ENCODE measurements at regions of chr14 and their contacts with region 1.

Region 1: DNA sequence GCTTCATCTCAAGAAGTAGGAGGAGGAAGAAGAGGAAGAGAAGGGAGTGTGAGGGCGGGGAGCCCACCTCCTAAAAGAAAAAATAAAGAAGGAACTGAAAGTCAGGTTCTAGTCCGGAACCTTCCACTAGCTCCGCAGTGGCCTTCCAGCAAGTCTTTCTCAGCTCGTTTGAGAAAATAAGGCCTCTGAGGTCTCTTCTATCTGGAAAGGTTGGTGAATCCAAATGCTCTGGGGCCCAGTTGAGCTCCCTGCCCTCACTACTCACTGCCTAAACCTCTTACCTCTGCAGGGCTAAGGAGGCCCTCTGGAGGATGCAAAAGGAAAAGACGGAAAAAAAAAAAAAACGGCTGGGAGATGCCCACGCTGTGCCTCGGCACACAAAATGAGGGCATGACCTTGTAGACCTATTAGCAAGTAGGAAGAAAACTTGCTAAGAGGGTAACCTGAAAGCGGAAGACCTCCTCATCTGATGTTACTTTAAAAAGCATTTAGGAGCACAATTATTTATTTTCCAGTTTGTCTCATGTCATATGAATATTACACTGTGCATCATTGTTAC is 35.9 kb downstream of the FBLN5 start:
- DNase-seq: peak in 2 of 7 donors; percentile 35 to 38
- H3K4me3 ChIP-seq: no peak overlapping the region
- H3K27ac ChIP-seq: no peak overlapping the region
- H3K4me1 ChIP-seq: peaks cover 0 to 5% of the 10 kb centered on the region in 2 donors
- H3K27me3 ChIP-seq: no peaks in the 10 kb centered on the region
- CTCF ChIP-seq: peak in 5 of 6 experiments; percentile 17 to 56 (median 42)
- POLR2A ChIP-seq: no peak

Region 2: GRCh38 chr14:91649930-91650329 is 261.6 kb before region 1 on chr14:
- intact Hi-C with region 1: loop called in 1 of 2 experiments (anchors 5 kb)
- DNase-seq: peak in 2 of 7 donors; percentile 8 to 27
- H3K4me3 ChIP-seq: no peak overlapping the region
- H3K27ac ChIP-seq: no peak overlapping the region
- H3K4me1 ChIP-seq: no peaks in the 10 kb centered on the region
- H3K27me3 ChIP-seq: no peaks in the 10 kb centered on the region
- CTCF ChIP-seq: peak; percentile 28 to 77 (median 48)
- POLR2A ChIP-seq: no peak

Region 3: GRCh38 chr14:91957876-91958313 is 46.3 kb after region 1 on chr14:
- intact Hi-C with region 1: loop called in 1 of 2 experiments (anchors 5 kb)
- DNase-seq: no peak
- H3K4me3 ChIP-seq: no peak overlapping the region
- H3K27ac ChIP-seq: no peak overlapping the region
- H3K4me1 ChIP-seq: peaks cover 0 to 3% of the 10 kb centered on the region in 2 donors
- H3K27me3 ChIP-seq: no peaks in the 10 kb centered on the region
- CTCF ChIP-seq: no peak
- POLR2A ChIP-seq: no peak

Measured in adrenal gland (tissue), 19 donors.